Mammary epithelial cell (primary cell): ENCODE measurements at regions of chr9 and their contacts with region 1.

Region 1: GRCh38 chr9:93453047-93453914 is at the start of gene FAM120AOS:
- DNase-seq: peak; percentile 95
- H3K4me3 ChIP-seq: peak within 1 kb of the TSS; percentile 75 to 90 (median 84)
- H3K27ac ChIP-seq: peak within 1 kb of the TSS; percentile 76
- H3K4me1 ChIP-seq: peaks cover 17% of the 10 kb centered on the region
- H3K27me3 ChIP-seq: no peaks in the 10 kb centered on the region
- CTCF ChIP-seq: no peak
- total RNA-seq, gene FAM120AOS: 29.3 to 32.5 TPM

Region 2: GRCh38 chr9:93134015-93134739 is 319.1 kb before region 1 on chr9 and contains the start of gene NINJ1:
- CTCF ChIA-PET with region 1: no interaction called
- dilution Hi-C with region 1: no loop called
- in situ Hi-C with region 1: no loop called
- intact Hi-C with region 1: loop called (anchors 2 kb)
- DNase-seq: peak; percentile 95
- H3K4me3 ChIP-seq: peak within 1 kb of the TSS; percentile 85 to 87 (median 86)
- H3K27ac ChIP-seq: peak within 1 kb of the TSS; percentile 85
- H3K4me1 ChIP-seq: peaks cover 34% of the 10 kb centered on the region
- H3K27me3 ChIP-seq: no peaks in the 10 kb centered on the region
- CTCF ChIP-seq: no peak
- total RNA-seq, gene NINJ1: 50.2 to 92.2 TPM

Region 3: GRCh38 chr9:93319992-93320500 is 133.2 kb before region 1 on chr9:
- CTCF ChIA-PET with region 1: no interaction called
- dilution Hi-C with region 1: no loop called
- in situ Hi-C with region 1: no loop called
- intact Hi-C with region 1: no loop called
- DNase-seq: no peak
- H3K4me3 ChIP-seq: no peak overlapping the region
- H3K27ac ChIP-seq: no peak overlapping the region
- H3K4me1 ChIP-seq: no peaks in the 10 kb centered on the region
- H3K27me3 ChIP-seq: peaks cover 8% of the 10 kb centered on the region
- CTCF ChIP-seq: no peak

Region 4: DNA sequence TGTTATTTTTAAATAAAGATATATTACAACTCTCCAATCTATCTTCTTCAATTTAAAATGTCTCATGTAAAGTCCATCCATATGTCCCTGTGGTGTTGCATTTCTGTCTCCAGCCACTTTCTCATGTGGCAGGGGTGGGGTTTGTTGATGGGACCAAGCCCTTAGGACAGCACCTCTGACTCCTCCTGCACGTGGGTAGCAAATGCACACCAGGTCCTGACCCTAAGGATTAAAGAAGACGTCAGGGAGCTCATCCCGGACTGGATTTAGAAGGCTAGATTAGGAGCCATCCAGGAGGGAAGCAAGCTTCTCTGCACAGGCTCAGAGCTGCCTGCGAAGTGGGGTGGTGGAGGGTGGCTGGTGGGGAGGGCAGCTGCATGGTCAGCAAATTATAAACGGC is 39.0 kb after region 1 on chr9:
- CTCF ChIA-PET with region 1: no interaction called
- dilution Hi-C with region 1: no loop called
- in situ Hi-C with region 1: no loop called
- intact Hi-C with region 1: loop called (anchors 5 kb)
- DNase-seq: no peak
- H3K4me3 ChIP-seq: no peak overlapping the region
- H3K27ac ChIP-seq: no peak overlapping the region
- H3K4me1 ChIP-seq: no peaks in the 10 kb centered on the region
- H3K27me3 ChIP-seq: no peaks in the 10 kb centered on the region
- CTCF ChIP-seq: no peak

Region 5: GRCh38 chr9:93566408-93567270 is 113.4 kb after region 1 on chr9:
- CTCF ChIA-PET with region 1: interaction called, 4 read pairs
- dilution Hi-C with region 1: no loop called
- in situ Hi-C with region 1: no loop called
- intact Hi-C with region 1: loop called (anchors 2 kb)
- DNase-seq: peak; percentile 91
- H3K4me3 ChIP-seq: peak overlapping the region; percentile 47 to 62 (median 53)
- H3K27ac ChIP-seq: peak overlapping the region; percentile 50
- H3K4me1 ChIP-seq: peaks cover 19% of the 10 kb centered on the region
- H3K27me3 ChIP-seq: no peaks in the 10 kb centered on the region
- CTCF ChIP-seq: peak; percentile 72 to 80